ENCODE measurements at regions of chr16 and their contacts with region 1.

Region 1: DNA sequence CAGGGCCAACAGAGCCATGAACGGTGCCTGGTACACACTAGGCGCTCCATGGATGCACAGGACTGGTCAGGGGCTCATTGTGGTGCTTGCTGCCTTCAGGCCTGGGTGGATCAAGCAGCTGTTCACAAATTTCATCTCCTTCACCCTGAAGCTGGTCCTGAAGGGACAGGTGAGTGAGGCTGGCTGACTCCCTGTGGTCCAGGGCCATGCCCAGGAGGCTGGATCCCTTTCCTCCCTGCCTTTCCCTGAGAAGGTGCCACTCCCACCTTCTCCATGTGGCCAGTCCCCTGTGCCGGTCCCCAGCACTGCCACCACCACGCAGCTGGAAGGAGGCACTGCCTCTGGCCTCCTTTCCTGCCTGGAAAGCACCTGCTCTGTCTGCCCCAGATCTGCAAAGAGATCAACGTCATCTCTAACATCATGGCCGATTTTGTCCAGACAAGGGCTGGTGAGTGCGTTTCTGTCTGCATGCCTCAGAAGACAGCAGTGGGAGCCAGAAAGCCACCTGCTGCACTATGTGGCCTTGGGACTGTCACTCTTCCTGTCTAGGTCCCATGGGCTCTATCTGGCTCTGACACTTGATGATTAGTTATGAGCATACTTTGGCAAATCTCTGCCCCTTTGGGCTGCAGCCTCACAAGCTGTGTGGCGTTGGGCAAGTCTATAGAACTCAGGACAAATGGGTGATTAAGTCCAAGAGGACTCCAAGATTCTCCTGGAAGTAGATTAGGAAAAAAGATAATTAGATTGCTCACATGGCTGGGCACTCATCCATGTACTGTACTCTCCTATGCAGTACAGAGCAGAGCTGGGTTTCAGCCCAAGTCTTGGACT is 9.4 kb downstream of the CETP start:
- DNase-seq: no peak
- ATAC-seq: peak in 2 of 4 donors; percentile 21 to 49
- H3K4me3 ChIP-seq: no peak overlapping the region
- H3K27ac ChIP-seq: no peak overlapping the region
- H3K4me1 ChIP-seq: peaks cover 0 to 37% (median 3%) of the 10 kb centered on the region in 12 donors
- H3K27me3 ChIP-seq: no peaks in the 10 kb centered on the region
- CTCF ChIP-seq: no peak
- POLR2A ChIP-seq: no peak

Region 2: DNA sequence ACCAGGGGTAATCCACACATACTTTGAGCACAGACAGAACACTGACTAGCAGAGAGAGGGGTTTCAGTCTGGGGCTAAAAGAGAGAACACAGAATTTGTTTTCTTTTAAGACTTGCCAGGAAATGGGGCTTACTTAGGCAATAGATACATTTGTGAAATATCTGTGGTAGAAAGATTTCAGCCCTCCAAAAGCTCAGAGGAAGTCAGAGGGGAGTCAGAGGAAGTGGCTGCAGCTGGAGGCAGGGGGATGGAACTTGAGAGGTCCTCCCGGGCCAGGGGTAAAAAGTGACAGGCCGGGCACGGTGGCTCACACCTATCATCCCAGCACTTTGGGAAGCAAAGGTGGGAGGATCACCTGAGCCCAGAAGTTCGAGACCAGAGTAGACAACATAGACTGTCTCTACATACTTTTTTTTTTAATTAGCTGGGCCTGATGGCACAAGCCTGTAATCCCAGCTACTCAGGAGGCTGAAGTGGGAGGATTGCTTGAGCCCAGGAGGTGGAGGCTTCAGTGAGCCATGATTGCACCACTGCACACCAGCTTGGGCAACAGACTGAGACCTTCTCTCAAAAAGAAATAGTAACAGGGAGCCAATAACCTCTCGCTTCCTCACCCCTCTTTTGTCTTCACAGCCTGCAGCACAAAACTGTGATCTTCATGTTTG is 68.1 kb after region 1 on chr16:
- intact Hi-C with region 1: loop called in 4 of 10 experiments (anchors 5 to 10 kb)
- DNase-seq: no peak
- ATAC-seq: peak in 3 of 4 donors; percentile 29 to 46 (median 30)
- H3K4me3 ChIP-seq: peak overlapping the region in 1 of 12 donors; percentile 5
- H3K27ac ChIP-seq: peak overlapping the region in 2 of 12 donors; percentile 12 to 88
- H3K4me1 ChIP-seq: peaks cover 0 to 71% (median 6%) of the 10 kb centered on the region in 12 donors
- H3K27me3 ChIP-seq: no peaks in the 10 kb centered on the region
- CTCF ChIP-seq: no peak
- POLR2A ChIP-seq: no peak